Mammary epithelial cell (primary cell): ENCODE measurements at regions of chr1 and their contacts with region 1.

Region 1: GRCh38 chr1:165717918-165718515 is 19.7 kb upstream of the ALDH9A1 start:
- DNase-seq: peak; percentile 52
- H3K4me3 ChIP-seq: no peak overlapping the region
- H3K27ac ChIP-seq: no peak overlapping the region
- H3K4me1 ChIP-seq: no peaks in the 10 kb centered on the region
- H3K27me3 ChIP-seq: no peaks in the 10 kb centered on the region
- CTCF ChIP-seq: peak; percentile 77 to 87

Region 2: DNA sequence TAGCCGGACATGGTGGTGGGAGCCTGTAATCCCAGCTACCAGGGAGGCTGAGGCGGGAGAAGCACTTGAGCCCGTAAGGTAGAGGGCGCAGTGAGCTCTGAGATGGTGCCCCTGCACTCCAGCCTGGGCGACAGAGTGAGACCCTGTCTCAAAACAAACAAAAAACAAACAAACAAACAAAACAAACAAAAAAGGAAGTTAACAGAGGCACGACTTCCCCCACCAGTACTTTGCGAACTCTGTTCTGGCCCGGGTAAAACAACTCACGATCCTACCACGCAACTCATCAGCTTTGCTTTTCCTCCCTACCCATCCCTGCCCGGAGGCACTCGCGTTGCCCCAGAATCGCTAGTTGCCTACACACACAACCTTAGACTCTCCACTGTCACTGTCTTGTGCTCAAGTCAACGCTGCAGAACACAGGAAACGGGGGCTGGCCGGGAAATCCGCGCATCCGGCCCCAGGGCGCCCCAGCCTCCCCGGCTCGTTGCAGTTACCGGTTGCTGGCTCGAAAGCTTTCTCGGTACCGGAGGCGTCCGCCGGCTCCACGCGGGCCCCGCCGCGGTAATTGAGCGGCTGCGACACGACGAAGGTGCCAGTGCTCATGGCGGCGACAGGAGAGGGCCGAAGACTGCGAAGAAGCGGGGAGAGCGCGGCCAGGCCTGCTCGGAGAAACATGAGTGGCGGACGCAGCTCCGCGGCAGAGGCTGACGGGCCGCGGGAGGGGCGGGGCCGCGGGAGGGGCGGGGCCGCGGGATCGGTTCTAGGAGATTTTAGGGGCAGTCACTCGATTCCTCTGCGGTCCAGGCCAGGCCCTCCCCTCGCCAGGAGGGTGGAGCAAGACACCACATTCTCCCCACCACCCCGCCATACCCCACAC is 19.9 kb before region 1 on chr1 and contains the start of gene ALDH9A1:
- CTCF ChIA-PET with region 1: no interaction called
- dilution Hi-C with region 1: no loop called
- in situ Hi-C with region 1: no loop called
- intact Hi-C with region 1: loop called (anchors 1 kb)
- DNase-seq: peak; percentile 80
- H3K4me3 ChIP-seq: peak within 1 kb of the TSS; percentile 57 to 87 (median 79)
- H3K27ac ChIP-seq: peak within 1 kb of the TSS; percentile 79
- H3K4me1 ChIP-seq: peaks cover 13% of the 10 kb centered on the region
- H3K27me3 ChIP-seq: no peaks in the 10 kb centered on the region
- CTCF ChIP-seq: peak; percentile 1 to 34
- total RNA-seq, gene ALDH9A1: 51.2 to 55.2 TPM

Region 3: DNA sequence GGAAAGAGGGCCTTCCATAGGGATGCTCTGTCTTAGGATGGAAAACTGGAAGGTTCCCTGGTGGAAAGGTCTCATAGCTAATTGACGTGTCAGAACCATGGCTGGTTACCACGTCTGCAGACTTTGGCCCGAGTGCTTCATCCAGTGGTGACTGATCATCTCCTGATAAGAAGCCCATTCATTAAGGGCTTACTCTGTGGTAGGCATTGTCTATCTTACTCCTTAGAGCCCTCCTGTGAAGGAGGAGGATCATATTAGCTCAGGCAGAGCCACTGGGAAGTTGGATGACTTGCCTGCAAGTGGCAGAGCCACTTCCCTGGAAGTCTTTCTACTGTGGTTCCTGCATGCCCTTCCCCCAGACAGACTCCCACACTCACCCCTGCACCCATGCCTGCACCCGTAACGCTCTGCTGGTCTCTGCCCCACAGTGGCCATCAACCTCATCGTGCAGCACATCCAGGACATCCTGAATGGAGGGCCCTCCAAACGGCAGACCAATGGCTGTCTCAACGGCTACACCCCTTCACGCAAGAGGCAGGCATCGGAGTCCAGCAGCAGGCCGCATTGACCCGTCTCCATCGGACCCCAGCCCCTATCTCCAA is 189.3 kb after region 1 on chr1:
- CTCF ChIA-PET with region 1: no interaction called
- dilution Hi-C with region 1: no loop called
- in situ Hi-C with region 1: loop called (anchors 5 kb)
- intact Hi-C with region 1: no loop called
- DNase-seq: no peak
- H3K4me3 ChIP-seq: no peak overlapping the region
- H3K27ac ChIP-seq: no peak overlapping the region
- H3K4me1 ChIP-seq: peaks cover 23% of the 10 kb centered on the region
- H3K27me3 ChIP-seq: no peaks in the 10 kb centered on the region
- CTCF ChIP-seq: no peak

Region 4: GRCh38 chr1:165928075-165928731 is 210.2 kb after region 1 on chr1:
- CTCF ChIA-PET with region 1: no interaction called
- dilution Hi-C with region 1: loop called (anchors 10 kb)
- in situ Hi-C with region 1: no loop called
- intact Hi-C with region 1: no loop called
- DNase-seq: peak; percentile 60
- H3K4me3 ChIP-seq: no peak overlapping the region
- H3K27ac ChIP-seq: no peak overlapping the region
- H3K4me1 ChIP-seq: no peaks in the 10 kb centered on the region
- H3K27me3 ChIP-seq: no peaks in the 10 kb centered on the region
- CTCF ChIP-seq: peak; percentile 64 to 78

Region 5: DNA sequence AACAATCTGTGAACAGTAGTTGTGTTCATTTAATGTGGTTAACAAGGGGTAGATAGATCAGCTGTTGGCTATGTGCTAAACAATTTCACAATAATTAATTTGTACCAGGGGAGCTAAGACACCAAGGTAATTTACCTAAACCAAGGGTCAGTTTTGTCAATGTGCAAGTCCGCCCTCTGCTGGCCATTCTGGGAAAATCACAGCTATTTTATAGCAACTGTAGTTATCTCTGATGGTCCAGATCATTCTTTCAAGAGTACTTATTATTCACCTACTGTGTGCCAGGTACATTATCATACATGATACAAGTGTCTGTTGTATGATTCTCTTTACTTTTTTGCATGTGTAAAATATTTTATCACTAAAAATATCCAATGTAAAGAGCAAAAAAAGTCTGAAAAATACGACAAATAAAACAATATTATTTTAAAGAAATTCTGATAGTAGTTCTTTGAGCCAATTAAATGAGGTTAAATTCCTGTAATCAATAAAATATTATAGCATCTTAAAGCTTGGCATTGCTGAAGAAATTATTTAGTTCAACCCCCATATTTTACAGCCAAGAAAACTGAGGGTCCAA is 761.1 kb after region 1 on chr1:
- CTCF ChIA-PET with region 1: no interaction called
- dilution Hi-C with region 1: no loop called
- in situ Hi-C with region 1: loop called in 1 of 2 experiments (anchors 25 kb)
- intact Hi-C with region 1: loop called (anchors 5 kb)
- DNase-seq: peak; percentile 9
- H3K4me3 ChIP-seq: no peak overlapping the region
- H3K27ac ChIP-seq: no peak overlapping the region
- H3K4me1 ChIP-seq: no peaks in the 10 kb centered on the region
- H3K27me3 ChIP-seq: no peaks in the 10 kb centered on the region
- CTCF ChIP-seq: peak; percentile 67 to 70